ENCODE measurements at regions of chr12 and their contacts with region 1.

Region 1: DNA sequence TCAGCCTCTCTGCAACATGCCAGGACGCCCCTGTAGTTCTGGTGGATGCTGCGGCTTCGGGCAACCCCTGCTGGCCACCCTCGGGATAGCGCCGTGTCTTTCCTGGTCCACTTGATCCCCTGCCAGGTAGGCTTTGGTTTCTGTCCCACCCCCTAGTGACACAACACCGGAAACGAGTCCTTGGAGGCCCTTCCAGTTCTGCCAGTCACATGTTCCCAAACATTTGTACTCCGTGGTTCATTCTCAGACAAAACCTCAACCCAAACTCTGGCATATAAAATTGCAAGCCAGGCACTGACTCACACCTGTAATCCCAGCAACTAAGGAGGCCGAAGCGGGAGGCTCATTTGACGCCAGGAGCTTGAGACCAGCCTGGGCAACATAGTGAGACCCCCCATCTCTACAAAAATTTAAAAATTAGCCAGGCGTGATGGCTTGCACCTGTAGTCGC is 37.1 kb downstream of the RASAL1 start:
- DNase-seq: peak; percentile 89 to 95
- ATAC-seq: peak; percentile 75 to 86
- H3K4me3 ChIP-seq: no peak overlapping the region
- H3K27ac ChIP-seq: peak overlapping the region; percentile 41 to 44; a peak in 3 of 6 replicates
- H3K4me1 ChIP-seq: peaks cover 5% of the 10 kb centered on the region; the same call in 2 of the 3 replicates
- CTCF ChIP-seq: peak; percentile 76
- EP300 ChIP-seq: no peak
- POLR2A ChIP-seq: no peak
- RAD21 ChIP-seq: peak; percentile 80 to 86

Region 2: DNA sequence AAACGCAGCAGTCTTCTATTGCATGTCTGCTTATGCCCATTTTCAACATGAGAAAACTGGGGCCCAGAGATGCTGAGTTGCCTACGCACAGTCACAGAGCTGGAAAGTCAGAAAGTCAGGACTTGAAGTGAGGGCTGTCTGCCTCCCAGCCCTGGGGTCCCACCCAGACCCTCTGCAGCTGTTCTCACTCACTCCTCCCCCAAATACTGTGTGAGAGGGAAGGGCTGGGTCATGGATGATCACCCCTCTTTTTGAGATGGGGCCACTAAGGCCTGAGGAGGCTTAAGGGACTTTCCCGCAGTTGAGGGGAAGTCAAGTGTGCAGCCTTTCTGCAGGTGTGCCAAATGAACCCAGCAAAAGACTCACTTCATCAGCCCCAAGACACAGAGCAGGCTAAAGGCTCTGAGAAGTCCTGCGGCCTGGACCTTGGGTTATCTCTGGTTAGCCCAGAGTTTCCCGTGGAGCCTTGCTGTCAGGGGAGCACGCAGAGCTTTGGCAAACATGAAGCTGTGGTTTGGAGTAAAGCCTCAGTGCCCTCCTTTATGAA is 23.3 kb before region 1 on chr12:
- CTCF ChIA-PET with region 1: interaction called, 12 read pairs
- POLR2A ChIA-PET with region 1: no interaction called
- DNase-seq: no peak
- ATAC-seq: no peak
- H3K4me3 ChIP-seq: no peak overlapping the region
- H3K27ac ChIP-seq: no peak overlapping the region
- H3K4me1 ChIP-seq: peaks cover 8% of the 10 kb centered on the region
- CTCF ChIP-seq: no peak
- EP300 ChIP-seq: no peak
- POLR2A ChIP-seq: no peak
- RAD21 ChIP-seq: no peak

Region 3: GRCh38 chr12:113109872-113110599 is 11.6 kb after region 1 on chr12:
- CTCF ChIA-PET with region 1: interaction called, 22 read pairs
- POLR2A ChIA-PET with region 1: no interaction called
- DNase-seq: no peak
- ATAC-seq: peak in 1 of 2 experiments; percentile 9; a peak in 2 of 6 replicates
- H3K4me3 ChIP-seq: no peak overlapping the region
- H3K27ac ChIP-seq: no peak overlapping the region
- H3K4me1 ChIP-seq: no peaks in the 10 kb centered on the region
- CTCF ChIP-seq: no peak
- EP300 ChIP-seq: no peak
- POLR2A ChIP-seq: no peak
- RAD21 ChIP-seq: no peak

Region 4: DNA sequence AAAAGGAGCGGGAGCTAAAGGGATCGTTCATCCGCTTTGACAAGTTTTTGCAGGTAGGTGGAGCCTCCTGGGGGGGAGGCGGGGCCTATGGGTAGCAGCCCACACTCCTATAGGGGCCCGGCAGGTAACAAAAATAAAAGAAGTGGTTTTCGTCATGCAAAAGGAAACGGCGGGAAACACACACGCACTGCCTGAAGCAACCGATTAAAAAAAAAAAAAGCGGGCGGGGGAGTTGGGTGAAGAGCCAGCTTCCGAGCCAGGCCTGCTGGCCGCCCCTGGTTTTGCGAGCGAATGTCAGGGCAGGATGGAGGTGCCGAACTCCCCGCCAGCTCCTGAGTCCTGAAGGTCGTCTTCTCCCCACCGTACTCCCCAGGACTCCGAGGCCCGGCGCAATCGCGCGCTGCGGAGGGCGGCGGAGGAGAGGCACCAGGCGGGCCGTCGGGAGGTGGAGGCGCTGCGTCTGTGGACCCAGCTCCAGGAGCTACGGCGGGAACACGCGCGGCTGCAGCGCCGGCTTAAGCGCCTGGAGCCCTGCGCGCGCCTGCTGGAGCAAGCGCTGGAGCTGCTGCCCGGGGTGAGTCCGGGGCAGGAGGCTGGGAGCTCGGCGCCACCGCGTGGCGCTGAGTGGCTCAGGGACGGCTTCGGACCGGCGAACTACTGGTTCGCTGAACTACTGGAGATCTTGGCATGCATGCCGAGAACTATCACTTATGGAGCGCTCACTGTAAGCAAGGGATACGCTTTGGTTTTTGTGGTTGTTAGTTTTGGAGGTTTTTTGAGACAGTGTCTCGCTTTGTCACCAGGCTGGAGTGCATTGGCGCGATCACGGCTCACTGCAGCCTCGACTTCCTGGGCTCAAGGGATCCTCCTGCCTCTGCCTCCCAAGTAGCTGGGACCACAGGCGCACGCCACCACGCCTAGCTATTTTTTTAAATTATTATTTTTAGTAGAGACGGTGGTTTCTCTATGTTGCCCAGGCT is 54.7 kb after region 1 on chr12:
- CTCF ChIA-PET with region 1: interaction called, 20 read pairs
- POLR2A ChIA-PET with region 1: no interaction called
- DNase-seq: peak; percentile 90 to 92
- ATAC-seq: peak; percentile 83 to 92
- H3K4me3 ChIP-seq: peak overlapping the region; percentile 43
- H3K27ac ChIP-seq: peak overlapping the region in 1 of 2 experiments; percentile 69; a peak in 2 of 6 replicates
- H3K4me1 ChIP-seq: peaks cover 6% of the 10 kb centered on the region; the same call in 1 of the 3 replicates
- CTCF ChIP-seq: peak; percentile 65
- EP300 ChIP-seq: no peak
- POLR2A ChIP-seq: no peak
- RAD21 ChIP-seq: peak; percentile 67 to 75

Region 5: GRCh38 chr12:113241191-113242025 is 142.9 kb after region 1 on chr12:
- CTCF ChIA-PET with region 1: no interaction called
- POLR2A ChIA-PET with region 1: no interaction called
- DNase-seq: peak in 1 of 2 experiments; percentile 66
- ATAC-seq: peak; percentile 35 to 55; a peak in 5 of 6 replicates
- H3K4me3 ChIP-seq: no peak overlapping the region
- H3K27ac ChIP-seq: peak overlapping the region in 1 of 2 experiments; percentile 62; a peak in 2 of 6 replicates
- H3K4me1 ChIP-seq: peaks cover 38% of the 10 kb centered on the region
- CTCF ChIP-seq: no peak
- EP300 ChIP-seq: no peak
- POLR2A ChIP-seq: no peak
- RAD21 ChIP-seq: no peak